PC-3 (cell line): ENCODE measurements at regions of chr3 and their contacts with region 1.

Region 1: DNA sequence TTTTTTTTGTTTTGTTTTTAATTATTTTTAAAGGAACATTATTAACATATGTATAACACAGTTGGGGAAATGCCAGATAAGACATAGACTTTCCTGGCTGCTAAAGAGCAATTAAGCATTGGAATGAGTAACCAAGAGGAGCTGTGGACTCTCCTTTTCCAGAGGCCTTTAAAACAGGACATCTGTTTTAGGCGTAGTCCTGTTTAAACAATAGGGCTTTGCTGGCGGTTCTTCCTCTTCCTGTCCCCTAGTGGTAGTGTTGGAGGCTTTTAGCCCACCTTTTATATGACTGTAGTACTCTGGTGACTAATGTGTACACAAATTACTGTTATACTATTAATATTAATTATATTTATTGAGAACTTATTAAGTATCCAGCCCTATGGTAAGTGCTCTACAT is 81.9 kb downstream of the PPARG start:
- DNase-seq: peak; percentile 88
- ATAC-seq: peak; percentile 78
- H3K4me3 ChIP-seq: no peak overlapping the region
- H3K27ac ChIP-seq: peak overlapping the region; percentile 91
- H3K4me1 ChIP-seq: peaks cover 65% of the 10 kb centered on the region
- H3K27me3 ChIP-seq: no peaks in the 10 kb centered on the region
- CTCF ChIP-seq: peak; percentile 42; the same call in 1 of the 2 replicates

Region 2: GRCh38 chr3:12308517-12308916 is 62.2 kb before region 1 on chr3:
- CTCF ChIA-PET with region 1: no interaction called
- POLR2A ChIA-PET with region 1: no interaction called
- intact Hi-C with region 1: loop called (anchors 1 kb)
- DNase-seq: peak; percentile 98
- ATAC-seq: peak; percentile 54
- H3K4me3 ChIP-seq: peak overlapping the region; percentile 17
- H3K27ac ChIP-seq: peak overlapping the region; percentile 97
- H3K4me1 ChIP-seq: peaks cover 95% of the 10 kb centered on the region
- H3K27me3 ChIP-seq: no peaks in the 10 kb centered on the region
- CTCF ChIP-seq: no peak

Region 3: GRCh38 chr3:12384451-12385233 is 13.9 kb after region 1 on chr3:
- CTCF ChIA-PET with region 1: no interaction called
- POLR2A ChIA-PET with region 1: interaction called, 3 read pairs
- intact Hi-C with region 1: loop called (anchors 1 kb)
- DNase-seq: no peak
- ATAC-seq: no peak
- H3K4me3 ChIP-seq: no peak overlapping the region
- H3K27ac ChIP-seq: peak overlapping the region; percentile 10
- H3K4me1 ChIP-seq: peaks cover 44% of the 10 kb centered on the region
- H3K27me3 ChIP-seq: no peaks in the 10 kb centered on the region
- CTCF ChIP-seq: no peak

Region 4: DNA sequence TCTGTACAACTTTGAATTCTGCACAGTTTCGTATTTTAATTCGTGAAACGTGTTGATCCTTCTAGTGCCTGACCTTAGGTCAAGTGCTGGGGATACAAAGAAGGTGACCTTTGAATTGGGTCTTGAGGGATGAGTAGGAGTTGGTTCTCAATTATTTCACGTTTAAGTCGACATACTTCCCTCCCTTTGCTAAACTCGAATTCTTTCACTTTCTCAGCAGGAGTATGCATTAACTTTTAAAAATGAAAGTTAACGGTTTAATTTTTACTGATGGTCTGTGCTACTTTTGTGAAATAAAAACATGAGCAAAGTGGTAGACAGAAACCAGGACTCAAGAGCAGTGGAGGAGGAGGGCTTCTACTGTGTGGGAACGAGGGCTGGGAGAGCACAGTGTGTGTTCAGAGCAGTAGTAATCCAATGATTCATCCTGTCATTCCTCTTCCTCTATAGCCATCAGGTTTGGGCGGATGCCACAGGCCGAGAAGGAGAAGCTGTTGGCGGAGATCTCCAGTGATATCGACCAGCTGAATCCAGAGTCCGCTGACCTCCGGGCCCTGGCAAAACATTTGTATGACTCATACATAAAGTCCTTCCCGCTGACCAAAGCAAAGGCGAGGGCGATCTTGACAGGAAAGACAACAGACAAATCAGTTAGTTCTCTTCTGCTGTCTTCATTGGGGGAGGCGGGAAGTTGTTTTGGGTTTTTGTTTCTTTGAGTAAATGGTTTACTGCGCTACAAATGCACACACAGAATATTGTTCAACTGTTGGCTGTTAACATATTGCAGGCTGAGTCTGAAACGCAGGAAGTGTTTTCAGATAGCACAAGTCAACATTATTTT is 34.9 kb after region 1 on chr3:
- CTCF ChIA-PET with region 1: no interaction called
- POLR2A ChIA-PET with region 1: no interaction called
- intact Hi-C with region 1: loop called (anchors 2 kb)
- DNase-seq: peak; percentile 98
- ATAC-seq: peak; percentile 94
- H3K4me3 ChIP-seq: 0 out of 2 replicates have a peak overlapping the region, but pooled peaks have one; percentile 15
- H3K27ac ChIP-seq: peak overlapping the region; percentile 92
- H3K4me1 ChIP-seq: peaks cover 59% of the 10 kb centered on the region
- H3K27me3 ChIP-seq: no peaks in the 10 kb centered on the region
- CTCF ChIP-seq: no peak

Region 5: GRCh38 chr3:12471243-12471651 is 100.5 kb after region 1 on chr3:
- CTCF ChIA-PET with region 1: no interaction called
- POLR2A ChIA-PET with region 1: no interaction called
- intact Hi-C with region 1: loop called (anchors 2 kb)
- DNase-seq: peak; percentile 99
- ATAC-seq: peak; percentile 84
- H3K4me3 ChIP-seq: no peak overlapping the region
- H3K27ac ChIP-seq: peak overlapping the region; percentile 99
- H3K4me1 ChIP-seq: peaks cover 35% of the 10 kb centered on the region
- H3K27me3 ChIP-seq: no peaks in the 10 kb centered on the region
- CTCF ChIP-seq: peak; percentile 72